Thyroid gland (tissue), 4 donors: ENCODE measurements at regions of chr17 and their contacts with region 1.

Region 1: GRCh38 chr17:82917691-82918345 is 78.0 kb upstream of the ZNF750 start:
- DNase-seq: peak; percentile 32 to 46
- H3K4me3 ChIP-seq: no peak overlapping the region
- H3K27ac ChIP-seq: no peak overlapping the region
- H3K4me1 ChIP-seq: peaks cover 0 to 8% of the 10 kb centered on the region in 2 donors
- H3K27me3 ChIP-seq: no peaks in the 10 kb centered on the region
- CTCF ChIP-seq: peak in 5 of 6 experiments; percentile 22 to 50 (median 41)
- POLR2A ChIP-seq: no peak

Region 2: DNA sequence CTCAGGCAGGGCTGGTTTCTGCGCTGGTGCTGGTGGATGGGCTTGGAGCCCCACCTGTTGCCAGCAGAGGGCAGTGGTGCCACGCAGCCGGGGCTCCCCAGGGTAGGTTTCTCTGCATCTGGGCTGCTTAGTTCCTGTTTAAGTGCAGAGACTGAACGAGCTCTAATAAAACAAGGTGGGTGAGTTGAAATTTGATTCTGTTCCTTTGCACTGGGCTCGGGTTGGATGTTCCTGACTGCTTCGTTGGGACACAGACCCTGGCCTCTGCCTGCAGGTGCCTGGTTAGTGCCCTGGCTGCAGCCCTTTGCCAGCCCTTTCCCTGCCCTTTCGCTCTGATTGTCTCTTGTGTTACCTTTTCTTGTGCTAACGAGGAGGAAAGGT is 135.9 kb before region 1 on chr17:
- intact Hi-C with region 1: loop called (anchors 5 kb)
- DNase-seq: peak; percentile 86 to 89
- H3K4me3 ChIP-seq: no peak overlapping the region
- H3K27ac ChIP-seq: peak overlapping the region in 2 of 3 donors; percentile 43 to 56
- H3K4me1 ChIP-seq: peaks cover 5 to 8% of the 10 kb centered on the region in 2 donors
- H3K27me3 ChIP-seq: no peaks in the 10 kb centered on the region
- CTCF ChIP-seq: peak; percentile 95 to 99 (median 98)
- POLR2A ChIP-seq: no peak